ENCODE measurements at regions of chr7 and their contacts with region 1.

Region 1: DNA sequence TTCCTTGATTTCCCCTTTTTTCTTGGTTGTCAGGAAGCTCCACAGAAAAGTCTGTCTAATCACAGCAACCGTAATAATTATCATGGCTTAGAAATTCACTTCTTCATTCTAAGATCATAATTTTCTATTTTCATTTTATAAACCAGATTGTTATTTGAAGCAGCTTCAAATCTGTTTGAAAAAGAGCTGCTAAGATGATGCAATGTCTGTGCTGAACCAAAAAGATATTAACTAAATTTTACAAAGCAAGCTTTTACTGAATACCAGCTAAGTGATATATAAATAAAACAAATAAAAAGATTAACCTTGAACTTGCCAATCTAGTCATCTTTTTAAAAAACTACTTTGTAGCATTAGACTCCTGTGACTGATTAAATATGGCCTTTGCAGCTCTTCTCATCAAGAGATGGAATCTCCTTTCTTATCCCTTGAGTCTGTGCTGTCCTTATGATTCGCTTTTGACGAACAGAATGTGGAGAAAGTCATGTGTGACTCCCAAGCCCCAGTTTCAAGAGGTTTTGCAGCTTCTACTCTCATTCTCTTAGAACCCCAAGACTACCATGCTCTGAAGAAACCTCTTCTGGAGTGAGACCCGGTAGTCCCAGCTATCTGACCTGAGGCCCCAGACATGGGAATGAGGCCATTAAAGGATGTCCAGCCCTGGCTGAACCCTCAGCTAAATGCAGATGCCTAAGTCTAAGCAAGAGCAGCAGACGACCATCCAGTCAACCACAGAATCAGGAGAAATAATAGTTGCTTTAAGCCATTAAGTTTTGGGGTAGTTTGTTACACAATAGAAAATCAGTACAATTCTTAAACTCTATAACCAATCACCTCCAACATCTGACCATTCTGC is 14.4 kb downstream of the NAMPT start:
- DNase-seq: no peak
- ATAC-seq: no peak
- H3K4me3 ChIP-seq: no peak overlapping the region
- H3K4me3 Mint-ChIP-seq: no peak overlapping the region
- H3K27ac ChIP-seq: no peak overlapping the region
- H3K27ac Mint-ChIP-seq: no peak overlapping the region
- H3K4me1 ChIP-seq: no peaks in the 10 kb centered on the region
- H3K4me1 Mint-ChIP-seq: no peaks in the 10 kb centered on the region
- H3K27me3 ChIP-seq: no peaks in the 10 kb centered on the region
- H3K27me3 Mint-ChIP-seq: no peaks in the 10 kb centered on the region

Region 2: DNA sequence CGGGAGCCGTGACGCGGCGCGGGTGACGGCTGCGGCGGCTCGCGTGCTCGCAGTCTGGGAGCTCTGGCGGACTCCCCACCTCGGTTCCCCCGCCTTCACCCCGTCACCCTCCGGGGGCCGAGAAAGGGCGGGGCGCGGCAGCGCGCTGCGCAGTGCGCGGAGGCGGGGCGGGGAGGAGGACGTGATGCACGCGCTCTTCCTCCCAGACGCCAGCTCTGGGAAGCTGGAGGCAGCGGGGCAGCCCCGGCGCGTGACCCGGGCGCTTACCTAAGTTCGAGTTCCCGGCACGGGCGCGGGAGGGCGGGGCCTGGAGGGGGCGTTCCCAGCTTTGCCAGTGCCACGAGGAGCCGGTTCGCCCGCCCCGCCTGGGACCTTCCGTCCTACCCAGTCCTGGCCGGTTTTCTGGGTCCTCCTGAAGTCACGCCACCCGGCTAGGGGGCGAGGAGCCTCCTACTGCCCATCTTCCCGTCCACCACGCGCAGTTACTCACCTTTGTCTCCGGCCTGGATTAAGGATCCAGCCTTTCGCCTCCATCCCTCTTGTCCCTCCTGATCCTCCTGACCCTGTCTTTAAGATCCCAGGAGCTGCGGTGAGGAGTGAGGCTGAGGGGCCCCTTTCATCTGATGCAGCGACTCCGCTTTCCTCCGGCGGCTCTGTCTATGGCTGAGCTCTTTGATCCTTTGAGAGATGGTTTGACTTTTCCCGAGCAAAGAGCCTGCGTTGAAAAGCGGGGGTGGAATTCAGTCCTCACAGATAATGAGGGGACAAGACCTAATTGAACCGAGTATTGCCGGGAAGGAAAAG is 14.9 kb after region 1 on chr7:
- CTCF ChIA-PET with region 1: interaction called in 1 of 2 experiments, 6 read pairs
- POLR2A ChIA-PET with region 1: interaction called, 7 to 15 read pairs
- DNase-seq: peak; percentile 86 to 100 (median 97)
- ATAC-seq: peak; percentile 88 to 96 (median 92)
- H3K4me3 ChIP-seq: peak overlapping the region; percentile 81 to 97
- H3K4me3 Mint-ChIP-seq: peak overlapping the region; percentile 85 to 97 (median 95)
- H3K27ac ChIP-seq: peak overlapping the region; percentile 91
- H3K27ac Mint-ChIP-seq: peak overlapping the region; percentile 94 to 97
- H3K4me1 ChIP-seq: peaks cover 7 to 12% of the 10 kb centered on the region in 2 experiments
- H3K4me1 Mint-ChIP-seq: peaks cover 30 to 38% (median 35%) of the 10 kb centered on the region in 3 donors
- H3K27me3 ChIP-seq: no peaks in the 10 kb centered on the region
- H3K27me3 Mint-ChIP-seq: peaks cover 0 to 1% of the 10 kb centered on the region in 2 donors

Region 3: DNA sequence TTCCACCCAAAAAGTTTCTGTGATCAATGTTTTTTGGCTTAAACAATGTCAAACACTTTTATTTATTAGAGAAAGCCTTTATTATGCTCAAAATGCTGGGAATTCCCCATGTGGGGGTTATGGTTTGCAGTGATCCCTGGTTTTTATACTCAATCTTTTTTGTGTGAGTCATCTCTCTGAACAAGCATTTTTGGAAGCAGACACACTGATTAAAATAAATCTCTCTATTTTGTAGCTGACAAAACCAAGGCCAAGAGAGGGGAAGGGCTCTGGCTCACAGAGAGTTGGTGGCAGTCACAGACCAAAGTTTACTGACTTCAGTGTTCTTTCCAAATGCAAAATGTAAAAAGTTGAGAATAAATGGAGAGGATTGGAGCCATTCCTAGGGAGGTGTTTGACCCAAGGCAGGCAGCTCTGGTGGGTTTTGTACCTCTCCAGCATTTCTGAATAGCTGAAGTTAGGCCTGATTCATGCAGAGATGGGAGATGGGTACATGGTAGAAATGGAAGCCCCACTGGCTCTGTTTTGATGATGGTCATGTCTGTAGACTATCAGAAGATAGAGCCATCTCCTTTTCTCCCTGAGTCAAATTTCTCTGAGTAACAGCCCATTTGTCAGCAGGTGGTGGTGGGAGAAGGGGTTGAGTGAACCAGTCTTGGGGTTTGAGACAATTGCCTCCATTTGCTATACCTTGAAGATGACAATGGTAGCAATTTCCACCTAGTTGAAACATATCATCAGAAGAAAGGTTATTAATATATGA is 59.8 kb after region 1 on chr7:
- CTCF ChIA-PET with region 1: no interaction called
- POLR2A ChIA-PET with region 1: no interaction called
- DNase-seq: no peak
- ATAC-seq: no peak
- H3K4me3 ChIP-seq: no peak overlapping the region
- H3K4me3 Mint-ChIP-seq: no peak overlapping the region
- H3K27ac ChIP-seq: no peak overlapping the region
- H3K27ac Mint-ChIP-seq: no peak overlapping the region
- H3K4me1 ChIP-seq: no peaks in the 10 kb centered on the region
- H3K4me1 Mint-ChIP-seq: no peaks in the 10 kb centered on the region
- H3K27me3 ChIP-seq: no peaks in the 10 kb centered on the region
- H3K27me3 Mint-ChIP-seq: peaks cover 3 to 22% of the 10 kb centered on the region in 2 donors

Measured in T-cell (primary cell).